ENCODE measurements at regions of chr1 and their contacts with region 1.

Region 1: DNA sequence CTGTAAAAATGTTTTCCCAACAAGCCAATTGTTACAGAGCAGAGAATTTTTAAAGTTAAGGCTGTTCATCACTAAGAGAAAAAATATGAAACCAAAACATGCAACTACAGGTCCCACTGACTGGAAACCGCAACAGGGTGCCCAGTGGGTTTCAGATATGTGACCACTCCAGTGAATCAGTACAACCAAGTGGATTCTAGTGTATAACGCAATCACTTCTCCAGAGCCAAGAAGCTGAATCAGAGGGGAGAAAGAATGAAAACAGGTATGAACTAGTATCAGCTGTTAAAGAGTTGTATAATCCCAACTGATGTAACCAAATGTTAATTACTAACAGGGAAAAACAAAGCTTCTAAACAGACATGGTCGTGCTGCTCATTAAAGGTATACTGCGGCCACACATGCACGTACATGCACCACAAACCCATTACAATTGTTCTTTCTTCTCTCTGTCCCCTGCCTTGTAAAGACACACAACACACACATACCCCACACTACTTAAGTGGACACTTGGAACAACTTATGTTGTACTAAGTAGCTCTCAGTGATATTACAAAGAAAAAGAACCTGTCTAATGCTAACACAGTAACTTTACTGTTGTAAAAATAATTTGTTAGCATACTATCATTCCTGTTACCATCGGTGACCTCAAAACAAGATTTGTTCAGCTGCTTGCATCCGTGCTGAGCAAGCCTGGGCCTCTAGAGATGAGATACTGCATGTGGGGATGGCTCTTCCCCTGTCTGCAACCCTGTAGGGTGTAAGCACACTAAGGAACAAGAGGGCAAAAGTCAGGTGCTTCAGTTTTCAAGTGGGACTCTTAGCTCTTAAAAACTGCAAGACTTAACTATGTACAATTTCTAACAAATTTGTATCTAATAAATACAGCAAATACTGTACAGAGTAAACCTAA is 74.2 kb downstream of the PTPN14 start:
- DNase-seq: peak; percentile 100
- H3K4me3 Mint-ChIP-seq: peak overlapping the region; percentile 65
- H3K27ac Mint-ChIP-seq: peak overlapping the region; percentile 88
- H3K4me1 Mint-ChIP-seq: peaks cover 68% of the 10 kb centered on the region
- H3K27me3 Mint-ChIP-seq: no peaks in the 10 kb centered on the region
- CTCF ChIP-seq: no peak

Region 2: GRCh38 chr1:214296860-214297745 is 180.1 kb before region 1 on chr1:
- CTCF ChIA-PET with region 1: no interaction called
- POLR2A ChIA-PET with region 1: no interaction called
- intact Hi-C with region 1: no loop called
- DNase-seq: peak; percentile 24
- H3K4me3 Mint-ChIP-seq: no peak overlapping the region
- H3K27ac Mint-ChIP-seq: peak overlapping the region; percentile 10
- H3K4me1 Mint-ChIP-seq: peaks cover 23% of the 10 kb centered on the region
- H3K27me3 Mint-ChIP-seq: no peaks in the 10 kb centered on the region
- CTCF ChIP-seq: no peak

Region 3: DNA sequence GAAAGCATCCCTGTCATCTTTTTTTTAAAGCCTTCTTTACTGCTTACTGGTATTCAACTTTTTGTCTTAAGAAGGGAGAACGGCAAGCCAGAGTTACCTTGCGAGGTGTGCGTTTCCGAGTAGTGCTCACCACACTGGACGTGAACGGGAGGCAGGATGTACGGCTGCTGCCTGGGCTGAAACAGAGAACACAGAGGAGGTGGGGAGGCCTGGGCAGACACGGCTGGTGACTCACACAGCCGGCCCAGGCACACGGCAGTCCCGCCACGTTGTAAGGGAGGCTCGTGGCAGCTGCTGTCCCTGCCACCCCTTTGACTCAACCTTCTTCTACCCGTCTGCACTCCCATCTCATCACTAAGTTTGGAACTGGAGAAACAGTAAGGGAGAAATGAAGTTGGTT is 90.5 kb before region 1 on chr1:
- CTCF ChIA-PET with region 1: interaction called, 6 read pairs
- POLR2A ChIA-PET with region 1: interaction called, 10 read pairs
- intact Hi-C with region 1: loop called (anchors 1 kb)
- DNase-seq: peak; percentile 83
- H3K4me3 Mint-ChIP-seq: no peak overlapping the region
- H3K27ac Mint-ChIP-seq: peak overlapping the region; percentile 76
- H3K4me1 Mint-ChIP-seq: peaks cover 14% of the 10 kb centered on the region
- H3K27me3 Mint-ChIP-seq: no peaks in the 10 kb centered on the region
- CTCF ChIP-seq: no peak

Region 4: GRCh38 chr1:214427871-214428277 is 49.3 kb before region 1 on chr1:
- CTCF ChIA-PET with region 1: interaction called, 5 read pairs
- POLR2A ChIA-PET with region 1: interaction called, 112 read pairs
- intact Hi-C with region 1: loop called (anchors 10 kb)
- DNase-seq: peak; percentile 97
- H3K4me3 Mint-ChIP-seq: peak overlapping the region; percentile 15
- H3K27ac Mint-ChIP-seq: peak overlapping the region; percentile 82
- H3K4me1 Mint-ChIP-seq: peaks cover 63% of the 10 kb centered on the region
- H3K27me3 Mint-ChIP-seq: no peaks in the 10 kb centered on the region
- CTCF ChIP-seq: no peak

Region 5: DNA sequence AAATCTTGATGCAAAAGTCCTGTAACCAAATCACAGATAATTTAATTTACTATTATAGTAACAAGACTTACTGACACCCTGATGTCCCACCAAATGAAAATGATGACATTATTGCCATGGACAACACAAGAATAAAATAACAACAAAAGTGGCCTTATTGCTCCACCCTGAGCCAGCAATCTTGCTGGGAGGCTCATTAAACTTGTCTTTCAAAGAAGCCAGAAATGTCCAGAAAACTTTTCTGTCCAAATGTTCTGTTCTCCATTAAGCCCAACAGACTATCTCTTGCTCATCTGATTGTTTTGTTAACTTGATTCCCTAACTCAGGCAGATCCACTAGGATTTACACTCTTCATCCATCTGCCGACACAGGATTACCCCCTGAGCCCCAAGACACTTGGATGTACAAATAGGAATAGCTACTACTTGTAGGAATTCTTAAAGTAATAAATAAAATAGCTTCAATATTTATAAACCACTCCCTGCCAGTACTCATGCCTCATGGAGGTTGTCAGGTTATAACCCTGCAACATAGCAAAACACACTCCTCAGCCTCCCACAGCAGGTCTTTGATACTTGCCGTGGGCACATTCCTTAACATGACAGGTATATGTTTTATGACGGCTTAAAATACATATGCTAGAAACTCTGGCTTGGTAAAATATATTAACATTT is 10.7 kb before region 1 on chr1:
- CTCF ChIA-PET with region 1: interaction called, 6 read pairs
- POLR2A ChIA-PET with region 1: interaction called, 588 read pairs
- intact Hi-C with region 1: no loop called
- DNase-seq: peak; percentile 54
- H3K4me3 Mint-ChIP-seq: peak overlapping the region; percentile 37
- H3K27ac Mint-ChIP-seq: peak overlapping the region; percentile 88
- H3K4me1 Mint-ChIP-seq: peaks cover 65% of the 10 kb centered on the region
- H3K27me3 Mint-ChIP-seq: no peaks in the 10 kb centered on the region
- CTCF ChIP-seq: no peak

Region 6: GRCh38 chr1:214537219-214537618 is 60.0 kb after region 1 on chr1:
- CTCF ChIA-PET with region 1: interaction called, 6 read pairs
- POLR2A ChIA-PET with region 1: interaction called, 22 read pairs
- intact Hi-C with region 1: no loop called
- DNase-seq: peak; percentile 61
- H3K4me3 Mint-ChIP-seq: no peak overlapping the region
- H3K27ac Mint-ChIP-seq: no peak overlapping the region
- H3K4me1 Mint-ChIP-seq: peaks cover 47% of the 10 kb centered on the region
- H3K27me3 Mint-ChIP-seq: no peaks in the 10 kb centered on the region
- CTCF ChIP-seq: no peak

Region 7: DNA sequence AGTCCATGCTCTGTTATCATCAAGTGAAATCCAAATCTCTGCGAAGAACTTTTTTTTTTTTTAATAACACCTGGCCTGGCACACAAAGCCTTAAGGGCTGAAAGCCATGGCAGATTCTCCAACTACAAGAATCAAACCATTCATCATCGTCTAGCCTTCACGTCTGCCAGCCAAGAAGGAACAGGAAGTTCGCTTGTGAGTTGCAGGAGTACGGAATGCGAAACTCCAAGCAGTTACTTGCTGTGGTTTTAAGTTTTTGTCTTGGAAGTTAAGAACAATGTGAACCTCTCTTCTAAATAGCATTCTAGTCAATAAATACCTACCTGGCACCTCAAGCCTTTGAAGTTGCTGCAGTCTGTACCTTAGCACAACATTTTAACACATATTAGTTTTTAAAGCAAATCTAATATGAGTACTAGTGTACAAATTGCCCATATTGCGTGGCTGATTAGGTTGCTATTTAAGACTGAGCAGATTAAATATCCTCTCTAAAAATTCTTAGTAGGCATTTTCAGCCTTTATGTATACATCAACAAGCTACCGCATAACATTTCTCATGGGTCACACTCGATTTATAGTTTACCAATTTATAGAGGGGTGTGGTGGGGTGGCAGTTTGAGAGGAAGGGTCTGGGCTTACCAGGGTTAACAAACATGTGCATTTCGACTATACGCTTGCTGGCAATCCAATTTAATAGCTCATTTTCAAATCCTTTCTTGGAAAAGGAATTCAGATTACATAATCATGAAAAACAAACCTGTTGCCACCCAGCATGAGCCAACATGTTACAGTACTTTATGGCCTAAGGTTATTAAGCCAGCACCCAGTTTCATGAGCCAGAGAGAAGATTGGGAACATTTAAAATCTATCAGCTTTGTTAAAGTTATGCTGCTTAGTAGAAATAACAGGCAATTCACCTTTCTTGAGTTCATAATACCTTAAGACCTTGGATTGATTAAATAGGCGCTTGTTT is 96.5 kb after region 1 on chr1:
- CTCF ChIA-PET with region 1: interaction called, 13 read pairs
- POLR2A ChIA-PET with region 1: interaction called, 536 read pairs
- intact Hi-C with region 1: loop called (anchors 2 kb)
- DNase-seq: peak; percentile 97
- H3K4me3 Mint-ChIP-seq: peak overlapping the region; percentile 59
- H3K27ac Mint-ChIP-seq: peak overlapping the region; percentile 95
- H3K4me1 Mint-ChIP-seq: peaks cover 65% of the 10 kb centered on the region
- H3K27me3 Mint-ChIP-seq: no peaks in the 10 kb centered on the region
- CTCF ChIP-seq: no peak